ENCODE measurements at regions of chr17 and their contacts with region 1.

Region 1: GRCh38 chr17:49508061-49508865 is 13.2 kb downstream of the NGFR start:
- DNase-seq: peak; percentile 97
- H3K4me3 ChIP-seq: peak overlapping the region in 1 of 3 experiments; percentile 21
- H3K27ac ChIP-seq: peak overlapping the region; percentile 52
- H3K4me1 ChIP-seq: peaks cover 37% of the 10 kb centered on the region
- H3K27me3 ChIP-seq: no peaks in the 10 kb centered on the region
- CTCF ChIP-seq: no peak

Region 2: GRCh38 chr17:49496183-49496866 is 11.9 kb before region 1 on chr17:
- CTCF ChIA-PET with region 1: interaction called, 4 read pairs
- dilution Hi-C with region 1: no loop called
- in situ Hi-C with region 1: no loop called
- intact Hi-C with region 1: loop called (anchors 1 kb)
- DNase-seq: peak; percentile 59
- H3K4me3 ChIP-seq: peak overlapping the region; percentile 60 to 79 (median 63)
- H3K27ac ChIP-seq: no peak overlapping the region
- H3K4me1 ChIP-seq: peaks cover 24% of the 10 kb centered on the region
- H3K27me3 ChIP-seq: no peaks in the 10 kb centered on the region
- CTCF ChIP-seq: peak; percentile 52 to 73

Region 3: GRCh38 chr17:49523706-49524472 is 15.6 kb after region 1 on chr17:
- CTCF ChIA-PET with region 1: no interaction called
- dilution Hi-C with region 1: no loop called
- in situ Hi-C with region 1: no loop called
- intact Hi-C with region 1: loop called (anchors 1 kb)
- DNase-seq: peak; percentile 95
- H3K4me3 ChIP-seq: no peak overlapping the region
- H3K27ac ChIP-seq: peak overlapping the region; percentile 35
- H3K4me1 ChIP-seq: peaks cover 22% of the 10 kb centered on the region
- H3K27me3 ChIP-seq: no peaks in the 10 kb centered on the region
- CTCF ChIP-seq: no peak

Region 4: GRCh38 chr17:49548506-49549310 is 40.4 kb after region 1 on chr17:
- CTCF ChIA-PET with region 1: no interaction called
- dilution Hi-C with region 1: no loop called
- in situ Hi-C with region 1: no loop called
- intact Hi-C with region 1: loop called (anchors 2 kb)
- DNase-seq: peak; percentile 51
- H3K4me3 ChIP-seq: no peak overlapping the region
- H3K27ac ChIP-seq: no peak overlapping the region
- H3K4me1 ChIP-seq: peaks cover 19% of the 10 kb centered on the region
- H3K27me3 ChIP-seq: no peaks in the 10 kb centered on the region
- CTCF ChIP-seq: peak; percentile 77

Region 5: DNA sequence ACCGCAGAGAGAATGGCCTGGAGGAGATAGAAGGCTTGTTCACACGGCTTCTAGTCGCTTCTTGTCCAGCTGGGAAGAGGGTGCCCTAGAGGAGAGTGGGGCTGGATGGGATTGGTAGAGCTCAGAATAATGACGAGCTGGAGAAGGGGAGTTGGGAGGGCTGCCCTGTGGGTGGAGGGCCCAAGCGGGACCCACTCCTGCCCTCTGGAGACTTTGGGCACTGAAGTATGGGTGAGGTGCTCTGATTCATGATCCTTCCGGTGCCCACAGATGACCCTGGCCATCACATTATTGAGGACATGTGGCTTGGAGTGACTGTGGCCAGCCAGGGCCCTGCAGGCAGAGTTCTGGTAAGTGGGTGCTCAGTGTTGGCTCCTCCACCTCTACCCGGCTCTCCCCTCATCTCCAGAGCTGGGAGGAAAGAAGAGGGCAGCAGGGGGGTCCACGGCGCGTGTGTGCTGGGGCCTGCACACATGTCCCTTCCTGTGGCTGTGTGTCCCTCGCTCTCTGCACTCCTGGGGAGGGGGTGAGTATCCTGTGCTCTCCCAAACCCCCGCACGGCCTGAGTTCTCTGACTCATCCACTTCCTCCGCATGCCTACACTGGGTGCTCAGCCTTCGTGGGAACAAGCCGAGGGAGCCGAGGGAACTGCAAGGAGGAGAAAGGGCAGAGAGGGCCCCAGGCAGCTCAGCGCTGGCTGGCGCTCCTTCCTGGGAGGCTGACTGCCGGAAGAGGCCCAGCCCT is 556.2 kb after region 1 on chr17:
- CTCF ChIA-PET with region 1: no interaction called
- dilution Hi-C with region 1: no loop called
- in situ Hi-C with region 1: no loop called
- intact Hi-C with region 1: loop called (anchors 10 kb)
- DNase-seq: peak; percentile 96
- H3K4me3 ChIP-seq: no peak overlapping the region
- H3K27ac ChIP-seq: peak overlapping the region; percentile 73
- H3K4me1 ChIP-seq: peaks cover 66% of the 10 kb centered on the region
- H3K27me3 ChIP-seq: no peaks in the 10 kb centered on the region
- CTCF ChIP-seq: peak in 1 of 2 donors; percentile 4